ENCODE measurements at regions of chr22 and their contacts with region 1.

Region 1: DNA sequence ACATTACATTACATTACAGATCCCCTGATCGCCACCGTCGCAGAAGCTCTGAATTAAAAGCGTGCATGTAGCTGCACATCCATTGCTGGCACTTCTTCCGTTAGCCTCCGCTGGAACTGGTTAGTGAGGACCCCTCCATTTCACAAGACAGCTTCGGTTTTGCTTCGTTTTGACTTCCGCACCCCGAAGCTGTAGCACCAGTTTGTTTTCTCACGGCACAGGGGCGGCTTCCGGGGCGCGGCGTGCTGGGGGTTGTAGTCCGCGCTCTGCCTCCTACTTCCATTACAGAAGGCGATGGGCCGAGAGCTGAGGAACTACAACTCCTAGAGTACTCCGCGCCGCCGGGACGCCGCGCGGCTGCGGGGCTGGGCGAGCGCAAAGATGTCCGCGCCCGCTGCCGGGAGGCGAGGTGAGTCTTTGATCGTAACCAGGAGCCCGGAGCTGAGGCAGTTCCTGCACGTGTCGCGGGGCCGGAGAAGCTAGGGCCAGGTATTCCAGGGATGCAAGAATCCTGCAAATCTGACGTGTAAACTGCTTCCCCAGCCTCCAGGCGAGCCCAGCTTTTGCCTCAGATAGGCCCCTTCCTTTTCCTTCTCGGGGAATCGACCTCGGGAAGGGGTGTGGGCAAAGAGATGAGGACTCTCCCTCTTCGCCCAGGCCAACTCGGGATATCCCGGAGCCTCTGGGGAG is at the start of gene PEX26:
- DNase-seq: peak; percentile 96
- ATAC-seq: peak; percentile 99
- total RNA-seq, gene PEX26: 21.6 to 22.5 TPM

Region 2: DNA sequence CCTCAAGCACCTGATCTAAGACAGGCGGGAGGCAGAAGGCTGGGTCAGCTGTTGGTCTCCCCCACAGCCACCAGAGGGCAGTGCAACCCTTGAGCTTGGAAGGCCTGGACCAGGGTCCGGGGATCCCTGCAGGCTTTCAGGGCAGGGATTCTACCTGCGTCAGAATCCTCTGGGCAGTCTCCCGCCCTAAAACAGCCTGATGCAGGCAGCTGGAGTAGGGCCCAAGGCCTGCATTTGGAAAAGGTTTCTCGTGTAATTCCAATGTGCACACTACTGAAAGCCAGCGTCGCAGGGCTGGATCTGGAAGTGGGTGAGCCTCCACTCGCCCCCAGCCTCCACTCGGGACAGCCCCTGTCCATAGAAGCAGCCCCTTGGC is 335.3 kb before region 1 on chr22:
- intact Hi-C with region 1: loop called in 1 of 2 experiments (anchors 5 kb)
- DNase-seq: peak; percentile 61
- ATAC-seq: peak; percentile 80 to 83

Region 3: DNA sequence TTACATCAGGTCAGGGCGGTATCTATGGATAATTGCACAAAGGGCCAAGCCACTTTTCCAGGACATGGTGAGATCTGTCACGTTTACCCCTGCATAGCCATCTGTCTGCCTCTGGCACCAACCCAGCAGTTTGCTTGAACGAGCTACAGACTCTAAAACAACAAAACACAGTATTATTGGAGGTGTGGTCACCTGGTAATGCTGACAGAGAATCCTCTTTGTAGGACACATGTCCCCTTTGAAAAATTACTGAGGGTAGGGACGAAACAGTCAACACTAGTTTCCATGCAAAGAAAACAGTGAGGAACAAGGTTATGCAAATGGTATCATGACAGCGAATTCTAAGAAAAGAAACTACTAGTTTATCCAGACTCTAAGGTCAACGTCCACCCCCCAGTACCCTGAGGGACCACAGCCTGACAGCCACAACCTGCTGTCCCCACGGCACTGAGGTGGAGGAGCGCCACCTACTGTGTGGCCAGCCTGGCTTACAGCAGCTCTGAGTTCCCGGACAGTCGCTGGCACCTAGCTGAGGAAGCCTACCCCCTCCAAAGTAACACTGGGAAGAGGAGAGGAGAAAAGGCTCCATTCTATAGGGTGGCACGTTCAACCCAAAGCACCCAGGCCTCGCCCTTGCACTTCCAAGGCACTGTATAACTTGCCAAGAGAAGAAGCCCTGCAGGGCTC is 186.2 kb before region 1 on chr22:
- intact Hi-C with region 1: loop called (anchors 5 kb)
- DNase-seq: peak; percentile 62
- ATAC-seq: peak; percentile 71 to 85

Region 4: GRCh38 chr22:17910561-17911311 is 167.0 kb before region 1 on chr22:
- intact Hi-C with region 1: loop called in 1 of 2 experiments (anchors 5 kb)
- DNase-seq: peak; percentile 86
- ATAC-seq: peak; percentile 89 to 91

Region 5: DNA sequence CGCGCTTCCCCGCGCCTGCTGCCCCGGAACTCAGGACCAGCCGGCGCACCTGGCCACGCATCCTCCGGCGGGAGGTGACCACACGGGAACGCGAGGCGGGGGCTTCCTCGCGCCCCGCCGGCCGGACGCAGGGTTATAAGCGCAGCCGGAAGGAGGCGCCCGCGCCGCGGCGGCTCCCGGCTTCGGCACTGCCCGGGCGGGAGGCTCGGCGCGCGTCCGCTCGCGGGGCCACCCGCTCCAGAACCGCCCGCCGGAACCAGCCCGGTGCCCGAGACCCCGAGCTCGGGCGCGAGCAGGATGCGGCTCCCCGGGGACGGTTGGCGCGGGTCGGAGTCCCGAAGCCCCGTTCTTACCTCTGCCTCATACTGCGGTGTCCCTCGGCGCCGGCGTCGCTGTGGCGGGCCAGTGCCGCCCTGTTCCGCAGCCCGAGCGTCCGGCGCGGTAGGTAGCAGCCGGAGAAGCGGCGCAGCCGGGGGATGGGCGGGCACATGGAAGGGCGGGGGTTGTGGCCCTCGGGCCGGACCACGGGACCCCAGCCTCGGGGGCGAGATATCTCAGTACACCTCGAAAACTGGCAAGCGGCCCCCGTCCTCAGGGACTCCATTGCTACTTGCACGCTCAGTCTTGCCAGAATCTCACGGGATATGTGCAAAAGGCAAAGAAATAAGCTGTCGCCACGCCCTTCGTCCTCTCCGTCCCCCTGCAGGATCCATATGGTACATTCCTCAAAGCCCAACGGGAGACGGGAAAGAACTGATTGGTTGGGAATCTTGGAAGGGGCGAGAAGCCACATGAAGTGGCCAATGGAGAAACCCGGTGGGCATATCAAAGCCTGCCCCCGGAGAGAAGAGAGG is 76.5 kb before region 1 on chr22:
- intact Hi-C with region 1: loop called in 1 of 2 experiments (anchors 2 kb)
- DNase-seq: peak; percentile 91
- ATAC-seq: peak; percentile 96 to 98

Region 6: DNA sequence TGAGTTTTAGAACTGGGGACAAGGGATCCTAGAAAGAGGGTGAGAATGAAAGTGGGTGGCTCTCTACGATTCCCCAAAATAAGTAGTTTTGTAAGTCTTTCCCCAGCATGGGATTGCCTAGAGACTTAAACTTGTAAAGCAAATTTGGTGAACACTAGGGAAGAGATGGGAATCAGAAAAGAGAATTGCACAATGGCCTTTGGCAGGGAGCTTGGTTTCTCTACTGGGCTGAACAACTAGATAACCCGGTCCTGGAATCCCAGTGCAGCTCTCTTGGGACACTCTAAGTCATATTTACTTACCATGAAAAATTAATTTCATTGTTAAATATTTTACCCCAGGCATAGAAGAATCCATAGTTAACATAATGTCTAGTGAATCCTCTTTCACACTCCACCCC is 55.7 kb after region 1 on chr22:
- intact Hi-C with region 1: no loop called
- DNase-seq: no peak
- ATAC-seq: peak; percentile 44 to 85

Region 7: DNA sequence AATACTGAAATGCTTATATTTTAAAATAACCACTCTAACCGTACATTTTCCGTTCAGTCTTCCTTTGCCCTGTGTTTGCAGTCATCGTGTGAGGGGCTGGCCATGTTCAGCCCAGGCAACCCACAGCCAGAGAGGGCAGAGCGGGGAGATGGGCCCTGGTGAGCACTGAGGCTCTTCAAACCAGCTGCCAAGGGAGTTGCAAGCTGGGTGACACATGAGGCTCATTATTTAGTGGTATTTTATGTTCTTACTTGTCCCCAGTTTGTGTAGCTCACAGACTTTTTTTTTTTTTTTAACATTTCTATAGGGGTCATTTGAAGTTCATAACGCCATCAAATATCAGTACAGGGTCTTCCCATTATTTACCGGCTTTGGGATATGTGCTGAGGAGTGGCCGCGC is 810.3 kb after region 1 on chr22:
- intact Hi-C with region 1: no loop called
- DNase-seq: no peak
- ATAC-seq: no peak